H1 (cell line): ENCODE measurements at regions of chr6 and their contacts with region 1.

Region 1: DNA sequence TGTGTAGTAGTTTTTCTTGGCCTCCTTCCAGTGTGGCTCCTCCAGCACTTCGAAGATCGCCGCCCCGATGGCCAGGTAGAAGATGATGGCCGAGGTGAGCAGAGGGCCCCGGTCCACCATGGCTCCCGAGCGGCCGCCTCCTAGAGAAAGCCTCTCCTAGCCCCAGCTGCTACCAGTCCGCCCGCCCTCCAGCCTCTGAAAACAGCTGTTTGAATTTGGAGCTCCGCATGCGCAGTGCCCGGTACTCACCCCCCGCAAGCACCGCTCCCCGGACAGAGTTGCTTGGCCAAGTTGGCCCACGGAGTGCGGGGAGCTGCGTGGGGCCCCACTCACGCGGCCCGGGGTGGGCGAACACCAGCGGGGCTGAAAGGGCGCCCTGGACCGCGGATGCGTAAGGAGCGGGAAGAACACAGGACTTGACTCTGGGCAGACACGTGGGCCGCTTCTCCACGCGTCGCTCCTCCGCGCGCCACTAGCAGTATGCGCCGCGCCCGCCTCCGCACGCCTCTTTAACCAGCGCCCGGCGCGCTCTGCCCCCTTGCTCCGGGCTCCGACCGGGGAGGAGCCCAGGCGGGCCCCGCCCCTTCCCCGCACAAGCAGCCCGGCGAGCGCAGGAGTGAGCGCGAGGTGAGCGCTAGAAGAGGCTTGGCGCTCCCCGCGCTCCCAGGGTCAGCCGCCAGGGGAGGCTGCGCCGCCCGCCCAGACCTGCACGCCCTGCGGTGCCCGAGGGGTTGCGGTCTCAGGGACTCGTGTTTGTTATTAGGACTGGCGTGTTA is at the start of gene KCNK5:
- DNase-seq: peak; percentile 80 to 93
- H3K4me3 ChIP-seq: peak within 1 kb of the TSS; percentile 63 to 88 (median 76)
- H3K27ac ChIP-seq: peak within 1 kb of the TSS; percentile 68; the same call in 1 of the 2 replicates
- H3K4me1 ChIP-seq: peaks cover 24 to 52% (median 36%) of the 10 kb centered on the region in 4 experiments
- H3K27me3 ChIP-seq: no peaks in the 10 kb centered on the region; a peak in 1 of 7 replicates
- CTCF ChIP-seq: peak; percentile 83 to 91 (median 90)
- EP300 ChIP-seq: no peak
- POLR2A ChIP-seq: peak; percentile 77 to 88
- RAD21 ChIP-seq: peak; percentile 65 to 83
- total RNA-seq, gene KCNK5: 42.2 and 44.3 TPM in 2 replicates

Region 2: DNA sequence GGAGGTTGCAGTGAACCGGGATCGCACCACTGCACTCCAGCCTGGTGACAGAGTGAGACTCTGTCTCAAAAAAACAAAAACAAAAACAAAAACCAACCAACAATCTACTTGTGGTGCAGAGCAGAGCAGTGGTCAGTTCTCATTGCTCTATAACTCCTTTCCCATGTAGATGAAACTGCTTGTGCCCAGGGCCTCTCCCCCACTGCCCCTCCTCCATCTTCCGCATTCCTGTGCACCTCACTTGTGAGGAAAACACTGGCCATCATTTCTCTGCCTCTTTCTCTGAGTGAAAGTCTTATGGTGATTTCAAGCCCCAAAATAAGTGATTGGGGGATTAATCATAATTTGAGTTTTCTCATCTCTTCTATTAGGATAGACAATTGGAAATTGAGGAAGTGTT is 244.5 kb before region 1 on chr6:
- CTCF ChIA-PET with region 1: no interaction called
- POLR2A ChIA-PET with region 1: no interaction called
- DNase-seq: no peak
- H3K4me3 ChIP-seq: no peak overlapping the region
- H3K27ac ChIP-seq: no peak overlapping the region
- H3K4me1 ChIP-seq: peaks cover 2 to 6% (median 5%) of the 10 kb centered on the region in 4 experiments; a peak in 6 of 7 replicates
- H3K27me3 ChIP-seq: no peaks in the 10 kb centered on the region; a peak in 1 of 7 replicates
- CTCF ChIP-seq: no peak
- EP300 ChIP-seq: no peak
- POLR2A ChIP-seq: no peak
- RAD21 ChIP-seq: no peak

Region 3: GRCh38 chr6:39189915-39190544 is 39.1 kb before region 1 on chr6:
- CTCF ChIA-PET with region 1: interaction called, 836 read pairs
- POLR2A ChIA-PET with region 1: interaction called, 5 read pairs
- DNase-seq: peak; percentile 27 to 79
- H3K4me3 ChIP-seq: no peak overlapping the region
- H3K27ac ChIP-seq: no peak overlapping the region
- H3K4me1 ChIP-seq: no peaks in the 10 kb centered on the region; a peak in 2 of 7 replicates
- H3K27me3 ChIP-seq: no peaks in the 10 kb centered on the region
- CTCF ChIP-seq: peak in 2 of 3 experiments; percentile 84 to 89; a peak in 3 of 4 replicates
- EP300 ChIP-seq: no peak
- POLR2A ChIP-seq: no peak
- RAD21 ChIP-seq: peak; percentile 78 to 84

Region 4: GRCh38 chr6:39209360-39209811 is 19.8 kb before region 1 on chr6:
- CTCF ChIA-PET with region 1: interaction called, 836 read pairs
- POLR2A ChIA-PET with region 1: interaction called, 66 read pairs
- DNase-seq: no peak
- H3K4me3 ChIP-seq: no peak overlapping the region
- H3K27ac ChIP-seq: no peak overlapping the region
- H3K4me1 ChIP-seq: peaks cover 34 to 58% (median 45%) of the 10 kb centered on the region in 4 experiments
- H3K27me3 ChIP-seq: no peaks in the 10 kb centered on the region
- CTCF ChIP-seq: no peak
- EP300 ChIP-seq: no peak
- POLR2A ChIP-seq: no peak
- RAD21 ChIP-seq: no peak

Region 5: GRCh38 chr6:39218873-39219536 is 10.2 kb before region 1 on chr6:
- CTCF ChIA-PET with region 1: interaction called, 836 read pairs
- POLR2A ChIA-PET with region 1: interaction called, 66 read pairs
- DNase-seq: no peak
- H3K4me3 ChIP-seq: no peak overlapping the region
- H3K27ac ChIP-seq: no peak overlapping the region
- H3K4me1 ChIP-seq: peaks cover 7 to 30% (median 16%) of the 10 kb centered on the region in 4 experiments
- H3K27me3 ChIP-seq: no peaks in the 10 kb centered on the region
- CTCF ChIP-seq: peak in 1 of 3 experiments; percentile 10; a peak in 1 of 4 replicates
- EP300 ChIP-seq: no peak
- POLR2A ChIP-seq: no peak
- RAD21 ChIP-seq: peak; percentile 10 to 48; a peak in 3 of 4 replicates

Region 6: GRCh38 chr6:39239527-39240154 is 10.5 kb after region 1 on chr6:
- CTCF ChIA-PET with region 1: interaction called, 20 read pairs
- POLR2A ChIA-PET with region 1: interaction called, 15 read pairs
- DNase-seq: no peak
- H3K4me3 ChIP-seq: no peak overlapping the region
- H3K27ac ChIP-seq: no peak overlapping the region
- H3K4me1 ChIP-seq: peaks cover 0 to 2% (median 1%) of the 10 kb centered on the region in 4 experiments; a peak in 3 of 7 replicates
- H3K27me3 ChIP-seq: no peaks in the 10 kb centered on the region
- CTCF ChIP-seq: peak in 2 of 3 experiments; percentile 17 to 19; a peak in 2 of 4 replicates
- EP300 ChIP-seq: no peak
- POLR2A ChIP-seq: no peak
- RAD21 ChIP-seq: peak in 1 of 2 experiments; percentile 32; a peak in 3 of 4 replicates

Region 7: DNA sequence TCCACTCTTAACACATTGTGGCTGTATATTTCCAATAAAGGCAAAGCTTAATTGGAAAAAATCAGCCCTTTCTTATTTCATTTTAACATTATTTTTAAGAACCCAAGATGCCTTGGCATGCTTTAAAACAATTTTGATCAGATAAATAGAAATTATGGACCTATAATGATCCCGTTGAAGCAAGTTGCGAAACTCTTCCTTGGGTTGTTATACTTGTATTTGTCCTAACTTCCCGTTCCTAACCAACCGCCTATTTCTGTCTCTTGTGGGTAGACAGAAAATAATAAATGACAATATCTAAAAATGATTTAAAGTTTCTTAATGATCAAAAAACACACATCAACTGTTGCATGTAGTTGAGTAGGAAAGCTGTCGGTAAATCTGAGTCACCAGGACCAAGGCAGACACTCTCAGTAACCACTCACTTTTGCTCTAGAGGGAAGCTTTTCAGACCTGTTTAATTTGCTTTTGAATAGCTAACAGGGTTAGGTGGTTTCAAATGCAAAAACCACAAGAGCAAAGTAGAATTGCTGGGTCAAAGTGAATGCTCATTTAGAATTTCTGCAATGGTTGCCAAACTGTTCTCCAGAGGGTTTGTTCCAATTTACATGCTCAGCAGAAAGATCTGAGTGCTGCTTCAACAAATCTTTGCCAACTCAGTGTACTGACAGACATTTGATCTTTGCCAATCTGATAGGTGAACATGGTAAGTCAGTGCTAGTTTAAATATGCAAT is 34.3 kb after region 1 on chr6:
- CTCF ChIA-PET with region 1: interaction called, 10 read pairs
- POLR2A ChIA-PET with region 1: interaction called, 10 read pairs
- DNase-seq: peak in 1 of 2 experiments; percentile 25
- H3K4me3 ChIP-seq: peak overlapping the region in 1 of 4 experiments; percentile 43; a peak in 1 of 8 replicates
- H3K27ac ChIP-seq: peak overlapping the region; percentile 47; the same call in 1 of the 2 replicates
- H3K4me1 ChIP-seq: peaks cover 0 to 10% (median 7%) of the 10 kb centered on the region in 4 experiments; a peak in 5 of 7 replicates
- H3K27me3 ChIP-seq: no peaks in the 10 kb centered on the region
- CTCF ChIP-seq: no peak
- EP300 ChIP-seq: no peak
- POLR2A ChIP-seq: no peak
- RAD21 ChIP-seq: 0 out of 4 replicates have a peak, but pooled peaks of 1 of the 2 experiments have one; percentile 2